HepG2 (cell line): ENCODE measurements at regions of chr3 and their contacts with region 1.

Region 1: GRCh38 chr3:129249276-129250065 is at the start of gene COPG1:
- DNase-seq: peak; percentile 81
- ATAC-seq: peak; percentile 87
- H3K4me3 ChIP-seq: peak within 1 kb of the TSS; percentile 72 to 99 (median 84)
- H3K27ac ChIP-seq: peak within 1 kb of the TSS; percentile 93
- H3K4me1 ChIP-seq: peaks cover 58% of the 10 kb centered on the region
- H3K27me3 ChIP-seq: no peaks in the 10 kb centered on the region; a peak in 1 of 5 replicates
- CTCF ChIP-seq: no peak
- EP300 ChIP-seq: no peak
- POLR2A ChIP-seq: peak; percentile 95
- RAD21 ChIP-seq: no peak; the same call in 1 of the 2 replicates
- total RNA-seq, gene COPG1: 166 and 201 TPM in 2 replicates

Region 2: DNA sequence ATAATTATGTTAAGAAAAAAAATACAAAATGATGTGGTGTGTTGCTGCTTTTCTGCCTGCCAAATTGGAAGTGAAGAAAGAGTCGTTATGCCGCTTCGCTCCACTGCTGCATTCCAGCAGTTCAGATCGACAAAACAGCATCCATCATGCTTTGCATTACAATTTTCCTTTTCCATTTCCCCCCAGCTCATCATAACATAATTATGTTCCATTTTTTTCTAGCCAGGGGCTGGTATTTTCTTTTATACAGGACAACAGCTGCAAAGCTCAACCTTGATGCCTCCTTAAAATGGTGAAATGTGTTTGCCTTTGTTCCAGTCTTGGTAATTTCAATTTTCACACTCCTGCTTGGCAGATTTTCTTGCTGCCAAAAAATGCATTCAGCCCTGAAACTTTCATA is 1379.3 kb before region 1 on chr3:
- CTCF ChIA-PET with region 1: no interaction called
- POLR2A ChIA-PET with region 1: no interaction called
- in situ Hi-C with region 1: no loop called
- intact Hi-C with region 1: no loop called
- DNase-seq: no peak
- ATAC-seq: no peak
- H3K4me3 ChIP-seq: no peak overlapping the region
- H3K27ac ChIP-seq: no peak overlapping the region
- H3K4me1 ChIP-seq: no peaks in the 10 kb centered on the region
- H3K27me3 ChIP-seq: peaks cover 0 to 2% of the 10 kb centered on the region in 2 experiments; a peak in 2 of 5 replicates
- CTCF ChIP-seq: no peak
- EP300 ChIP-seq: no peak
- POLR2A ChIP-seq: no peak
- RAD21 ChIP-seq: no peak

Region 3: DNA sequence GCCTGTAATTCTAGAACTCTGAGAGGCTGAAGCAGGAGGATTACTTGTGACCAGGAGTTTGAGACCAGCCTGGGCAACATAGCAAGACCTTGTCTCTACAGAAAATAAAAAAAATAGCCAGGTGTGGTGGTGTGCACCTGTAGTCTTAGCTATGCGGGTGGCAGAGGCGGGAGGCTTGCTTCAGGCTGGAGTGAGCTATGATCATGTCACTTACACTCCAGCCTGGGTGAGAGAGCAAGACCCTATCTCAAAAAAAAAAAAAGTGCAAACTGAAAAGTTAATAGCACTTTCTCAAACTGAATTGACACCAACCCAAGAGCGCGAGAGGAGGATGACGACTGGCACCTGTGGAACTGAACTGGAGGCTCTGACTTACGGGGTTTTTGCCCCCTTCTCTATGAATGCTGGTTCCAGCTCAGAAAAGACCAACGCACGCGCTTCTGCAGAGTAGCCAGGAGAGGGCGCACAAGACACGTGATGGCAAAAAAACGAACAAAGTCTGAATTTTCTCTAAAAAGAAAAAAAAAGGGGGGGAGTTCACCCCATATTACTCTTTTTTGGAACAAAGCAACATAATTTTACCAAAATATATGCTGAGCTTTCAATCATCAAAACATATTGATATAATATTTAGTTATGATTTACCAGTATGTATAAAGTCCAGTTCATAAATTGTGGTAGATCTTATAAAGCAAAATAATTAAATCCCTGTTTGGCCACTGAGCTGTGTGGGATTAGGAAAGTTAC is 279.3 kb before region 1 on chr3:
- CTCF ChIA-PET with region 1: interaction called, 20 read pairs
- POLR2A ChIA-PET with region 1: no interaction called
- in situ Hi-C with region 1: no loop called
- intact Hi-C with region 1: loop called (anchors 1 kb)
- DNase-seq: peak; percentile 25
- ATAC-seq: peak; percentile 69
- H3K4me3 ChIP-seq: no peak overlapping the region
- H3K27ac ChIP-seq: no peak overlapping the region
- H3K4me1 ChIP-seq: no peaks in the 10 kb centered on the region
- H3K27me3 ChIP-seq: peaks cover 2 to 37% of the 10 kb centered on the region in 2 experiments; a peak in 4 of 5 replicates
- CTCF ChIP-seq: peak; percentile 79
- EP300 ChIP-seq: no peak
- POLR2A ChIP-seq: no peak
- RAD21 ChIP-seq: peak; percentile 60

Region 4: GRCh38 chr3:129058441-129059200 is 190.8 kb before region 1 on chr3:
- CTCF ChIA-PET with region 1: interaction called, 20 read pairs
- POLR2A ChIA-PET with region 1: interaction called, 11 read pairs
- in situ Hi-C with region 1: no loop called
- intact Hi-C with region 1: loop called (anchors 1 kb)
- DNase-seq: no peak
- ATAC-seq: no peak
- H3K4me3 ChIP-seq: no peak overlapping the region
- H3K27ac ChIP-seq: no peak overlapping the region
- H3K4me1 ChIP-seq: peaks cover 31% of the 10 kb centered on the region
- H3K27me3 ChIP-seq: peaks cover 0 to 28% of the 10 kb centered on the region in 2 experiments; a peak in 3 of 5 replicates
- CTCF ChIP-seq: no peak
- EP300 ChIP-seq: no peak
- POLR2A ChIP-seq: no peak
- RAD21 ChIP-seq: no peak

Region 5: DNA sequence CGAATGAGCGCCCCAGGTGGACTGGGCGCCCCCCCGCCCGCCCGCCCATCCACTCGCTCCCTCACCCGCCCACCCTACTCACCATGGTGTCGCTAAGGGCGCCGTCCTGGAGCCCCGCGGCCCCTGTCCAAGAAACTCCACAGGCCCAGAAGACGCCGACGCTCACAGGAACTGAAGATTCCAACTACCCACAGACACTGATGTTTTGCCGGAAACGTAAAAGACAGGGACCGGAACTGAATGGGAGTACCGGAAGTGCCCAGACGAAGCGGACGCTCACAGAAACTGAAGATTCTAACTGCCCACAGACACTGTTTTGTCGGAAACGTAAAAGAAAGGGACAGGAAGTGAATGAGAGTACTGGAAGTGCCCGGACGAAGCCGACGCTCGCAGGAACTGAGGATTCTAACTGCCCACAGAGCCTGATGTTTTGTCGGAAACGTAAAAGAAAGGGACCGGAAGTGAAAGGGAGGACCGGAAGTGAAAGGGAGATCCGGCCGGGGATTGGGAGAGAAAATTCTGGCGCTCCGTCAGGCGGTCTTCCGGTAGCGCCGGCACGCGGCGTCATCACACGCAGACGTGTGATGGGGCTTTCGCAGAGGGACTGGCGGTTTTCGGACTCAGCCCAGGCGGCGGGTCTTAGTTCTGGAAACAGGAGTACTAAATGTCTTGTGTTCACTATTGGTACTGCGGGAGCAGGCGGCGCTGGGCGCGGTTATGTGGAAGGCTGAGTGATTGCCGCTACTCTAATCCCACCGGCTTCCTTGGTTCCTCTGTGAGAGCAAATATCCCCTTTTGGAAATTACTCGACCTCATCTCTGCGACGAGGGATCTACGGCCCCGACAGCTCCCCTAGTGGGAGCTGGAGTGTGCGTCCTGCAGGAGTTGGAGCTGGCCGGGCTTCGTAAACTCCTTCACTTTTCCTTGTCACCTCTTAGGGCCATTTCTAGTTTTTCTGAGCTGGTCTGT is 88.3 kb before region 1 on chr3 and contains the start of gene ISY1:
- CTCF ChIA-PET with region 1: interaction called, 17 read pairs
- POLR2A ChIA-PET with region 1: interaction called, 13 read pairs
- in situ Hi-C with region 1: no loop called
- intact Hi-C with region 1: loop called (anchors 1 kb)
- DNase-seq: peak; percentile 92
- ATAC-seq: peak; percentile 82
- H3K4me3 ChIP-seq: peak within 1 kb of the TSS; percentile 91 to 99 (median 96)
- H3K27ac ChIP-seq: peak within 1 kb of the TSS; percentile 100
- H3K4me1 ChIP-seq: peaks cover 22% of the 10 kb centered on the region
- H3K27me3 ChIP-seq: no peaks in the 10 kb centered on the region; a peak in 1 of 5 replicates
- CTCF ChIP-seq: peak; percentile 65
- EP300 ChIP-seq: 0 out of 4 replicates have a peak, but pooled peaks of 1 of the 2 experiments have one; percentile 5
- POLR2A ChIP-seq: peak; percentile 82 to 94
- RAD21 ChIP-seq: peak; percentile 27; the same call in 1 of the 2 replicates
- total RNA-seq, gene ISY1: 39.1 and 59.0 TPM in 2 replicates

Region 6: GRCh38 chr3:129224984-129225393 is 24.5 kb before region 1 on chr3:
- CTCF ChIA-PET with region 1: interaction called, 14 read pairs
- POLR2A ChIA-PET with region 1: interaction called, 15 read pairs
- in situ Hi-C with region 1: no loop called
- intact Hi-C with region 1: loop called (anchors 2 kb)
- DNase-seq: peak; percentile 92
- ATAC-seq: peak; percentile 96
- H3K4me3 ChIP-seq: peak overlapping the region; percentile 48 to 67 (median 60)
- H3K27ac ChIP-seq: peak overlapping the region; percentile 91
- H3K4me1 ChIP-seq: peaks cover 59% of the 10 kb centered on the region
- H3K27me3 ChIP-seq: no peaks in the 10 kb centered on the region
- CTCF ChIP-seq: peak; percentile 26; the same call in 1 of the 2 replicates
- EP300 ChIP-seq: peak in 1 of 2 experiments; percentile 73; a peak in 3 of 4 replicates
- POLR2A ChIP-seq: peak; percentile 81 to 89
- RAD21 ChIP-seq: peak; percentile 8; the same call in 1 of the 2 replicates

Region 7: GRCh38 chr3:129278439-129278970 is 29.0 kb after region 1 on chr3 and contains the start of gene HMCES:
- CTCF ChIA-PET with region 1: no interaction called
- POLR2A ChIA-PET with region 1: interaction called, 16 read pairs
- in situ Hi-C with region 1: no loop called
- intact Hi-C with region 1: no loop called
- DNase-seq: peak; percentile 80
- ATAC-seq: peak; percentile 88
- H3K4me3 ChIP-seq: peak within 1 kb of the TSS; percentile 72 to 98 (median 78)
- H3K27ac ChIP-seq: peak within 1 kb of the TSS; percentile 90
- H3K4me1 ChIP-seq: peaks cover 44% of the 10 kb centered on the region
- H3K27me3 ChIP-seq: no peaks in the 10 kb centered on the region; a peak in 1 of 5 replicates
- CTCF ChIP-seq: peak; percentile 12; the same call in 1 of the 2 replicates
- EP300 ChIP-seq: no peak
- POLR2A ChIP-seq: peak in 1 of 2 experiments; percentile 70; a peak in 1 of 4 replicates
- RAD21 ChIP-seq: no peak
- total RNA-seq, gene HMCES: 37.5 and 52.4 TPM in 2 replicates